Activated B cell treated with CpG ODN at 0.5 μM for 24 hours (primary cell): ENCODE measurements at regions of chr6 and their contacts with region 1.

Region 1: DNA sequence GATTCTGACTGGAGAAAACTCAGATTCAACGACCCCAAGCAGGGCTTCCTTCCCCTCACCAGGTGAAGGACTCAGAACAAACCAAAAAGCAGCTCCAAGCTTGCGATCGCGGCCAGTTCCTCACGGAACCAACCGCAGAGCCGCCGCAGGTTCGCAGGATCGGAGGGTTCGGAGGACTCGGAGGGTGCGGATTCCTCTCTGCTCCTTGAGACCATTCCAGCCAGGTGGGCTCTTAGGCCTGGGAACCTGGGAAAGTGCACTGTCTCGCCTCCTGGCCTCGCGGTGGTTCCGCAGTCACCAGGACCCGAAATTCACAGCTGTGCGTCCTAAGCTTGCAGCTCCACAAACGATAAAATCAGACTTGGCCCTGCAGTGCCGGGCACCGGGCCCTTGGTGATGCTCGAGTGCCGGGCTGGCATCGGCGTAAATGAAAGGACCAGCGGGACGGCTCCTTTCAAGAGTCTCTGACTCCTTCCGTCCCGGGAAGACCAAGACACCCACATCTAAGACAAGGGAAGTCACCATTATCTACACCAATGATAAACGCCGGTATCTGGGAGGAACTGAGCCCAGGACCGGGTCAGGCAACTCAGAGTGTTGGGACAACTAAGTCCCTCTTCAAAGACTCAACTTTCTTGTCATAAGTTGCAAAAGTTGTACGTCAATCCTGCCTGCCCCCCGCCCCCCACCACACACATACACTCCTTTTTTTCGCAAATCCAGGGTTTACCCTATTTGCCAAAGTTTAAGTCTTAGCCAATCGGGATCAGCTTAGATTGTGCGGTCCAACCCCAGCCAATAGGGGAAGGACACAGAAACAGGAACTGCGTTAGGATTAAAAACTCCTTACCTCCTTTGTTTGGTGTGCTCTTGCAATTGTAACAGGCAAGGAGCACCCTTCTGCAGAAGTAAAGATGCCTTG is 69.8 kb upstream of the PRSS16 start:
- DNase-seq: peak; percentile 64
- ATAC-seq: peak; percentile 82
- H3K4me3 Mint-ChIP-seq: peak overlapping the region; percentile 98
- H3K27ac Mint-ChIP-seq: peak overlapping the region; percentile 92
- H3K4me1 Mint-ChIP-seq: peaks cover 12% of the 10 kb centered on the region
- H3K27me3 Mint-ChIP-seq: peaks cover 5% of the 10 kb centered on the region
- CTCF ChIP-seq: no peak

Region 2: DNA sequence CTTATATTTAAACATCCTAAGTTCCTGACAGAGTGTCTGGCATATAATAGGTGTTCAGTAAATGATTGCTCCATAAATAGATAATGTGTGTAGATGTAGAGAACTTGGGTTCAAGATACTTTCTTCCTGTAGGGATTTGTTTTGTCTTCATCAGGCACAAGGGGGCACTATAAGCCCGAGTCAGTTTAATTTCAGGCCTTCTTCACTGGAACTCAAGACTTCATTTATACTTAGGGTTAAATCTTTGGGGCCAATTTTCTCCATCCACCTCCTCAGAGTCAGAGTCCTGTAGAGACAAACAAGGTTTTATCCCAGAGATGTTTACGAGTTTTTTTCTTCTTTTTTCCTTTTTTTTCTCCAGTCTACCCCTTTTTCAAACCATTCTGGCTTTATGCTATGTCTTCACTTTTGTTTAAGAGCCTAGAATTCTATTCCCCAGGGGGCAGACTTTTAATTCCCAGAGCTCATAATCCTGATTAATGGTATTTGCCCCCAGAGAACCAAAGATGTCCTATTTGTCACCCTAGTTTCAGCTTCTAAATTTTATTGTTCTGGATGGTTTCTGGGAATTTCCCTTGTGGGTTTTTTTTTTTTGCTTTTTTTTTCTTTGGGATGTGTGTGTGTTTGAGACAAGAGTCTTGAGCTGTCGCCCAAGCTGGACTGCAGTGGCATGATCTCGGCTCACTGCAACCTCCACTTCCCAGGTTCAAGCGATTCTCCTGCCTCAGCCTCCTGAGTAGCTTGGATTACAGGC is 1002.1 kb before region 1 on chr6:
- CTCF ChIA-PET with region 1: no interaction called
- POLR2A ChIA-PET with region 1: interaction called, 10 read pairs
- intact Hi-C with region 1: no loop called
- DNase-seq: no peak
- ATAC-seq: no peak
- H3K4me3 Mint-ChIP-seq: no peak overlapping the region
- H3K27ac Mint-ChIP-seq: peak overlapping the region; percentile 65
- H3K4me1 Mint-ChIP-seq: peaks cover 38% of the 10 kb centered on the region
- H3K27me3 Mint-ChIP-seq: no peaks in the 10 kb centered on the region
- CTCF ChIP-seq: no peak

Region 3: DNA sequence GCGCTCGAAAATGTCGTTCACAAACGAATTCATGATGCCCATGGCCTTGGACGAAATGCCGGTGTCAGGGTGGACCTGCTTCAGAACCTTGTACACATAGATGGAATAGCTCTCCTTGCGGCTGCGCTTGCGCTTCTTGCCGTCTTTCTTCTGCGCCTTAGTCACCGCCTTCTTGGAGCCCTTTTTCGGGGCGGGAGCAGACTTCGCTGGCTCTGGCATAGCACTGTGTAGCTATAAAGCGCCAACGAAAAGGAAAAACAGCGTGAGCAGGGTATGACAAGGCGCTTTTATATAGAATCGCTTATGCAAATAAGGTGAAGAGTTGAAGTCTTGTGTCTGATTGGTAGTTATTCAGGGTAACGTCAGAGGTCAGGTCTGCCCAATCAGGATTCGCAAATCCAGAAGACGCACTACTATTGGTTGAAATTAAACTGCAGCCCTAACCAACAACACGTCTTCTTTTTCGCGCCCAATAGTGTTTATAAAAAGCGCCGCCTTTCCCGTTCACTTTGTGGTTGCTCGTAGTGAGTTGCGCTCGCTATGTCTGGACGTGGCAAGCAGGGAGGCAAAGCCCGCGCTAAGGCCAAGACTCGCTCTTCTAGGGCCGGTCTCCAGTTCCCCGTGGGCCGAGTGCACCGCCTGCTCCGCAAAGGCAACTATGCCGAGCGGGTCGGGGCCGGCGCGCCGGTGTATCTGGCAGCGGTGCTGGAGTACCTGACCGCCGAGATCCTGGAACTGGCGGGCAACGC is 45.0 kb before region 1 on chr6:
- CTCF ChIA-PET with region 1: interaction called, 13 read pairs
- POLR2A ChIA-PET with region 1: interaction called, 48 read pairs
- intact Hi-C with region 1: loop called (anchors 1 kb)
- DNase-seq: peak; percentile 77
- ATAC-seq: peak; percentile 84
- H3K4me3 Mint-ChIP-seq: no peak overlapping the region
- H3K27ac Mint-ChIP-seq: no peak overlapping the region
- H3K4me1 Mint-ChIP-seq: peaks cover 14% of the 10 kb centered on the region
- H3K27me3 Mint-ChIP-seq: no peaks in the 10 kb centered on the region
- CTCF ChIP-seq: no peak

Region 4: GRCh38 chr6:27312146-27312949 is 134.6 kb after region 1 on chr6 and contains the start of gene POM121L2:
- CTCF ChIA-PET with region 1: interaction called, 3 read pairs
- POLR2A ChIA-PET with region 1: interaction called, 3 read pairs
- intact Hi-C with region 1: loop called (anchors 1 kb)
- DNase-seq: peak; percentile 53
- ATAC-seq: peak; percentile 71
- H3K4me3 Mint-ChIP-seq: peak within 1 kb of the TSS; percentile 82
- H3K27ac Mint-ChIP-seq: no peak within 1 kb of the TSS
- H3K4me1 Mint-ChIP-seq: peaks cover 12% of the 10 kb centered on the region
- H3K27me3 Mint-ChIP-seq: peaks cover 66% of the 10 kb centered on the region
- CTCF ChIP-seq: no peak
- total RNA-seq, gene POM121L2: not detected in 2 replicates

Region 5: GRCh38 chr6:27503436-27504030 is 325.8 kb after region 1 on chr6:
- CTCF ChIA-PET with region 1: no interaction called
- POLR2A ChIA-PET with region 1: no interaction called
- intact Hi-C with region 1: loop called (anchors 5 kb)
- DNase-seq: peak; percentile 61
- ATAC-seq: peak; percentile 39
- H3K4me3 Mint-ChIP-seq: peak overlapping the region; percentile 87
- H3K27ac Mint-ChIP-seq: peak overlapping the region; percentile 77
- H3K4me1 Mint-ChIP-seq: peaks cover 35% of the 10 kb centered on the region
- H3K27me3 Mint-ChIP-seq: peaks cover 12% of the 10 kb centered on the region
- CTCF ChIP-seq: no peak

Region 6: GRCh38 chr6:27795697-27796494 is 618.1 kb after region 1 on chr6:
- CTCF ChIA-PET with region 1: interaction called, 18 read pairs
- POLR2A ChIA-PET with region 1: interaction called, 4 read pairs
- intact Hi-C with region 1: no loop called
- DNase-seq: no peak
- ATAC-seq: peak; percentile 60
- H3K4me3 Mint-ChIP-seq: no peak overlapping the region
- H3K27ac Mint-ChIP-seq: peak overlapping the region; percentile 50
- H3K4me1 Mint-ChIP-seq: peaks cover 21% of the 10 kb centered on the region
- H3K27me3 Mint-ChIP-seq: peaks cover 6% of the 10 kb centered on the region
- CTCF ChIP-seq: no peak

Region 7: GRCh38 chr6:28335564-28336283 is 1158.0 kb after region 1 on chr6 and contains the start of gene ZSCAN31:
- CTCF ChIA-PET with region 1: no interaction called
- POLR2A ChIA-PET with region 1: no interaction called
- intact Hi-C with region 1: loop called (anchors 5 kb)
- DNase-seq: peak; percentile 61
- ATAC-seq: peak; percentile 93
- H3K4me3 Mint-ChIP-seq: no peak within 1 kb of the TSS
- H3K27ac Mint-ChIP-seq: no peak within 1 kb of the TSS
- H3K4me1 Mint-ChIP-seq: no peaks in the 10 kb centered on the region
- H3K27me3 Mint-ChIP-seq: no peaks in the 10 kb centered on the region
- CTCF ChIP-seq: no peak
- total RNA-seq, gene ZSCAN31: 1.0 and 3.6 TPM in 2 replicates

Region 8: GRCh38 chr6:28910902-28911690 is 1733.3 kb after region 1 on chr6:
- CTCF ChIA-PET with region 1: no interaction called
- POLR2A ChIA-PET with region 1: no interaction called
- intact Hi-C with region 1: no loop called
- DNase-seq: no peak
- ATAC-seq: no peak
- H3K4me3 Mint-ChIP-seq: no peak overlapping the region
- H3K27ac Mint-ChIP-seq: no peak overlapping the region
- H3K4me1 Mint-ChIP-seq: no peaks in the 10 kb centered on the region
- H3K27me3 Mint-ChIP-seq: no peaks in the 10 kb centered on the region
- CTCF ChIP-seq: no peak